ENCODE measurements at regions of chr9 and their contacts with region 1.

Region 1: DNA sequence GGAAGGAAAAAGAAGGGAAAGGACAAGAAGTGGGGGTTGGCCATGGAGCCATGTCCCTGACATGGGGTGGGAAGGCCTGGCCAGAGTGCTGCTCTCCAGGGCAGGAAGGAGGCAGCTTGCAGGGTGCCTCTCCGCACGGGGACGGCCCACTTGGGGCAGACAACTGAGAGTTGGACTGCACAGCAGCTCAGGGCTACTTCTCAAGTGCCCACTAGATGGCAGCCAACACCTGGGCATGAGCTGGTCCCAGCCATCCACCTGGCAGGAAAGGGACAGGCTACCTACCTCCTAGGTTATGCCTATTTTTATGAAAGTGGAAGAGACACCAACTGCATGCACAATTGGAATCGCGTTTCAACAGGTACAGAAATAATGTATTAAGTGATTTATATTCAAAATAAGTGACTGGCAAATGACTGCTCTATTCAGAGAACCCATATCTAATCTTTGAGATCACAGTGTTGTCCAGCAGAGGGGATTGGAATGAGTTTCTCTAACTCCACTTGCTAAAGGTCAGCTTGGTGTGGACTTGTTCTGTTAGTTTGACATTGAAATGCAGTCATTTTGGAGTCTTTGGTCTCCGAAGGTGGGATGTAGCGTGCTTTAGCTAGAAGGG is 113.4 kb downstream of the SYK start:
- DNase-seq: peak; percentile 54 to 79
- H3K4me3 ChIP-seq: no peak overlapping the region
- H3K27ac ChIP-seq: no peak overlapping the region
- H3K4me1 ChIP-seq: no peaks in the 10 kb centered on the region
- H3K27me3 ChIP-seq: no peaks in the 10 kb centered on the region
- CTCF ChIP-seq: peak; percentile 83 to 93 (median 92)
- EP300 ChIP-seq: no peak
- POLR2A ChIP-seq: no peak
- RAD21 ChIP-seq: peak; percentile 97 to 98

Region 2: DNA sequence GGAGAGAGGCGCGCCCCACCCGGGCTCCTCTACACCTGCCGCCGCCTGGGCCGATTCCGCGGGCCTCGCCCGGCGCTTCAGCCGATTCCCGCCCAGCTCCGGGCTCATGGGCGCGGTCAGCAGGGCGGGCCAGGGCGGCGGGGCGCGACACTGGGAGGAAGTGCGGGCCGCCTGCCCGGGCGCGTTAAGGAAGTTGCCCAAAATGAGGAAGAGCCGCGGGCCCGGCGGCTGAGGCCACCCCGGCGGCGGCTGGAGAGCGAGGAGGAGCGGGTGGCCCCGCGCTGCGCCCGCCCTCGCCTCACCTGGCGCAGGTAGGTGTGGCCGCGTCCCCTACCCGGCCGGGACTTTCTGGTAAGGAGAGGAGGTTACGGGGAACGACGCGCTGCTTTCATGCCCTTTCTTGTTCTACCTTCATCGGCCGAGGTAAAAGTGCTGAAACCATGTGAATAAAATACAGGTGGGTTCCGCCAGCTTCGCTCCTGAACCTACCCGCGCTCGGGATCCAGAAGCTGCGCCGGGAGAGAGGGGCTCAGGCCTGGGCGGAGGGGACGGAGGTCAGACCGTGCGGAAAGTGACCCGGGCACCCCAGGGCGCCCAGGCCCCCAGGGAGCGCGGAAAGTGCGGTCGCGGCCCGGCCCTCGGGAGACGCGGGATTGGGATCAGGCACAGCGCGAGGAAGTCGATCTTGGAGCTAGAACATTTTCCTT is 113.2 kb before region 1 on chr9 and contains the start of gene SYK:
- CTCF ChIA-PET with region 1: no interaction called
- POLR2A ChIA-PET with region 1: no interaction called
- DNase-seq: peak in 1 of 2 experiments; percentile 74
- H3K4me3 ChIP-seq: peak within 1 kb of the TSS; percentile 62 to 78 (median 66)
- H3K27ac ChIP-seq: no peak within 1 kb of the TSS
- H3K4me1 ChIP-seq: peaks cover 0 to 2% (median under 1%) of the 10 kb centered on the region in 4 experiments; a peak in 2 of 7 replicates
- H3K27me3 ChIP-seq: peaks cover 0 to 18% (median 11%) of the 10 kb centered on the region in 4 experiments; a peak in 6 of 7 replicates
- CTCF ChIP-seq: no peak
- EP300 ChIP-seq: no peak
- POLR2A ChIP-seq: no peak
- RAD21 ChIP-seq: 0 out of 4 replicates have a peak, but pooled peaks of 1 of the 2 experiments have one; percentile 4
- total RNA-seq, gene SYK: 4.4 and 5.6 TPM in 2 replicates

Region 3: DNA sequence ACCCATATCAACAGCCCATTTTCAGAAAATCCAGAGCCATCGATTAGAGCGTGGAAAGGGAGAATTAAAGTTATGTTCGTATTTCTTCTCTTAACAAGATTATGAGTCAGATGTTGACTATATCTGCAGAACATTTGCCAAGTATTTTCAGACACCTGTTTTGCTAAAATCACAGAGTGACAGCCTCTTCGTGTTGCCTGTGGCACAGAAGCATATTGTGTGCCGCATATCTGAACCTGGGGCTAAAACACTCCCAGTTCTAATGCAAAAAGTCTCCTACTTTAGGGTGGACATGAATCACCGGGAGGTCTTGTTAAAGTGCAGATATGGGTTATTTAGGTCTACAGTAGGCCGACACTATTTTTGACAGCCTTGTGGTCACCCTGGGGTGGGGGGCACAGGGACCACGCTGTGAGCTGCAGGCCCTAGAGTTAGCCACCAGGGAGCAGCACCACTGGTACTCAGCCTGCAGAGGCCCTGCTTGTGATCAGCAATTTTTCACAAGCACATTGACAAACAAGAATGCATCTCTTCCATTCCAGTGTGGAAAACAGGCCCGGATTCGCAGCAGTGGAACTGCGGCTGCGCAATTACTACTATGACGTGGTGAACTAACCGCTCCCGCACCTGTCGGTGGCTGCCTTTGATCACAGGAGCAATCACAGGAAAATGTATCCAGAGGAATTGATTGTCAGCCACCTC is 19.8 kb before region 1 on chr9:
- CTCF ChIA-PET with region 1: interaction called, 15 read pairs
- POLR2A ChIA-PET with region 1: no interaction called
- DNase-seq: no peak
- H3K4me3 ChIP-seq: no peak overlapping the region
- H3K27ac ChIP-seq: no peak overlapping the region
- H3K4me1 ChIP-seq: peaks cover 5 to 17% (median 13%) of the 10 kb centered on the region in 4 experiments
- H3K27me3 ChIP-seq: no peaks in the 10 kb centered on the region
- CTCF ChIP-seq: peak; percentile 65 to 87 (median 85)
- EP300 ChIP-seq: no peak
- POLR2A ChIP-seq: no peak
- RAD21 ChIP-seq: peak; percentile 24 to 53; a peak in 3 of 4 replicates

Region 4: GRCh38 chr9:90942555-90942954 is 27.6 kb after region 1 on chr9:
- CTCF ChIA-PET with region 1: interaction called, 12 read pairs
- POLR2A ChIA-PET with region 1: no interaction called
- DNase-seq: no peak
- H3K4me3 ChIP-seq: no peak overlapping the region
- H3K27ac ChIP-seq: no peak overlapping the region
- H3K4me1 ChIP-seq: no peaks in the 10 kb centered on the region
- H3K27me3 ChIP-seq: no peaks in the 10 kb centered on the region
- CTCF ChIP-seq: no peak
- EP300 ChIP-seq: no peak
- POLR2A ChIP-seq: no peak
- RAD21 ChIP-seq: no peak

Region 5: DNA sequence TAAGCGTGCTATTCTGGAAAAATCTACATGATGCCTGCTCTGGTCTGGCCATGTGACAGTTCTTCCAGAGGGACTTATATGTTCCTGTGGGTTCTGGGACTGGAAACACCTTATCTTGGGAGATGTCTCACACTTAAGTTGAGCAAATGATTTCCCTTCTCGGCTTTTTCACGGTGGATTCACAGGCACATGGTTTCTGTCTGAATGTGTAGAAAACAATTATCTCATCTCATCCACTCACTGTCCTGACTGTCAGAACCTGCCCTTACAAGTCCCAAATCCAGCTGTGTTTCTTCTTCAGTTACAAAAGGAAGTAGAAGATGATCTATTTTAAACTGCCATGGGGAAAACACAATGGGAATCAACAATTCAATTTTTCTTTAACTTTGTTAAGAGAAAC is 70.7 kb after region 1 on chr9:
- CTCF ChIA-PET with region 1: interaction called, 24 read pairs
- POLR2A ChIA-PET with region 1: no interaction called
- DNase-seq: no peak
- H3K4me3 ChIP-seq: no peak overlapping the region
- H3K27ac ChIP-seq: no peak overlapping the region
- H3K4me1 ChIP-seq: no peaks in the 10 kb centered on the region
- H3K27me3 ChIP-seq: no peaks in the 10 kb centered on the region
- CTCF ChIP-seq: no peak
- EP300 ChIP-seq: no peak
- POLR2A ChIP-seq: no peak
- RAD21 ChIP-seq: no peak

Region 6: GRCh38 chr9:91029650-91030361 is 114.8 kb after region 1 on chr9:
- CTCF ChIA-PET with region 1: interaction called, 68 read pairs
- POLR2A ChIA-PET with region 1: no interaction called
- DNase-seq: no peak
- H3K4me3 ChIP-seq: no peak overlapping the region
- H3K27ac ChIP-seq: no peak overlapping the region
- H3K4me1 ChIP-seq: no peaks in the 10 kb centered on the region
- H3K27me3 ChIP-seq: no peaks in the 10 kb centered on the region
- CTCF ChIP-seq: no peak
- EP300 ChIP-seq: no peak
- POLR2A ChIP-seq: no peak
- RAD21 ChIP-seq: no peak

Region 7: DNA sequence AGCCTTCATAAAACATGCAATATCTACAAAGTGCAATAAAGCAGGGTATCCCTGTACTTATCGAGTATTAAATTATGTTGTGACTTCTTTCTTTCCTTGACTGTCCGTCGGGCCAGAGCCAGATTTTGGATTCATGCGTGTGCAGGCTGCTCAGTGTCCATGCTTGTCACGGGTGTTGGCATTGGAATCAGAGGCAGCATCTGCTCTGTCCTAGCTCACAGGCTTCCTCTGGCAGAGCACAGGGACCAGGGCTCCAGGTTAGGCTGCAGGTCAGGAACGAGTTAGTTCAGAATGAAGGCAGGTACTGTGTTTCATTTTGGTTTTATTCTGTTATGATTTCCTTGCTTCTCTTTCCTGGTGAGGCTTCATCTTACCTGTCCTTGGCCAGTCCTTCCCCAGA is 196.9 kb after region 1 on chr9:
- CTCF ChIA-PET with region 1: interaction called, 12 read pairs
- POLR2A ChIA-PET with region 1: no interaction called
- DNase-seq: no peak
- H3K4me3 ChIP-seq: no peak overlapping the region
- H3K27ac ChIP-seq: no peak overlapping the region
- H3K4me1 ChIP-seq: no peaks in the 10 kb centered on the region
- H3K27me3 ChIP-seq: no peaks in the 10 kb centered on the region
- CTCF ChIP-seq: no peak
- EP300 ChIP-seq: no peak
- POLR2A ChIP-seq: no peak
- RAD21 ChIP-seq: no peak

Region 8: GRCh38 chr9:91433180-91433579 is 518.2 kb after region 1 on chr9:
- CTCF ChIA-PET with region 1: interaction called, 18 read pairs
- POLR2A ChIA-PET with region 1: no interaction called
- DNase-seq: no peak
- H3K4me3 ChIP-seq: no peak overlapping the region
- H3K27ac ChIP-seq: no peak overlapping the region
- H3K4me1 ChIP-seq: no peaks in the 10 kb centered on the region
- H3K27me3 ChIP-seq: no peaks in the 10 kb centered on the region
- CTCF ChIP-seq: no peak
- EP300 ChIP-seq: no peak
- POLR2A ChIP-seq: no peak
- RAD21 ChIP-seq: peak; percentile 8 to 12; a peak in 2 of 4 replicates